ENCODE measurements at regions of chr3 and their contacts with region 1.

Region 1: DNA sequence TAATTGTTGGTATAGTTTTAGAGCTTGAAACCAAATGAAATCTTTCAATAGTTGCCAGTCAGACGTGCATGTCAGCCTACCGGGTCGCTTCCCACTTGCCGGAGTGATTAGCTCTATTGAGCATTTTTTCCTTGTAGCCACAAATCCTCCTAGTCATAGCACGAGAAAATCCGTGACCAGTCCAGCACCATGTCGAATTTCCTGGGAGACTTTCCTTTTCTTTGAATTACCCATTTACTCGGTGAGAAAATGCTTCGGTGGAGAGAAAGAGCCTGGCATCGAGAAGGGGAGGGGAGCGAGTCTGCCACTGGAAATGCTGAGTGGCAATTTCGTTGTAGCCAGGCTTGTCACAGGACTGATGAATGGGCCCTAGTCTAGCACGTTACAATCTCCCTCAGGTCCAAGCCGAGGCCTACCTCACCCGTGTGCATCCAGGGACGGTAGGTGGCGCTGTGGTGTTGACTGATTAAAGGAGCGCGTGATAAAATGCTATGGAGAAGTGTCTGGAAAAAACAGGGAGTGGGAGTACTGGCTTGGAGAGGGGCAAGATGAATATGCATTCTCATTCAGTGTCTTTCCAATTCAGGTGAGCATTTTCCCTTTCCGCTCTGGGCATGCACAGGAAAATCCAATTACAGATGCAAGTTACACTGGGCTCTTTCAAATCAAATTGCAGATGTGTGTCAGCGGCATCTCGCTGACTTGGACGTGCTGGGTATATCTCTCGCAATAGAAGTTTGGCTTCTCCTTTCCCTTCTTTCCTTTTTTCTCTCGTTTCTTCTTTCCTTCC is 238.8 kb downstream of the EDEM1 start:
- DNase-seq: no peak
- ATAC-seq: peak; percentile 83
- H3K4me3 ChIP-seq: no peak overlapping the region
- H3K27ac ChIP-seq: no peak overlapping the region
- H3K4me1 ChIP-seq: peaks cover 17% of the 10 kb centered on the region
- H3K27me3 ChIP-seq: no peaks in the 10 kb centered on the region
- CTCF ChIP-seq: peak; percentile 83 to 98 (median 89)
- EP300 ChIP-seq: no peak
- POLR2A ChIP-seq: no peak
- RAD21 ChIP-seq: peak; percentile 90

Region 2: GRCh38 chr3:5304789-5305683 is 121.3 kb before region 1 on chr3:
- CTCF ChIA-PET with region 1: interaction called, 6 read pairs
- POLR2A ChIA-PET with region 1: no interaction called
- RAD21 ChIA-PET with region 1: no interaction called
- SMC1A ChIA-PET with region 1: no interaction called
- in situ Hi-C with region 1: no loop called
- intact Hi-C with region 1: loop called (anchors 5 kb)
- DNase-seq: no peak
- ATAC-seq: peak; percentile 95
- H3K4me3 ChIP-seq: no peak overlapping the region
- H3K27ac ChIP-seq: no peak overlapping the region
- H3K4me1 ChIP-seq: no peaks in the 10 kb centered on the region
- H3K27me3 ChIP-seq: no peaks in the 10 kb centered on the region
- CTCF ChIP-seq: peak; percentile 68 to 78 (median 75)
- EP300 ChIP-seq: no peak
- POLR2A ChIP-seq: no peak
- RAD21 ChIP-seq: peak; percentile 85

Region 3: GRCh38 chr3:5401002-5401401 is 25.3 kb before region 1 on chr3:
- CTCF ChIA-PET with region 1: interaction called, 10 read pairs
- POLR2A ChIA-PET with region 1: no interaction called
- RAD21 ChIA-PET with region 1: no interaction called
- SMC1A ChIA-PET with region 1: interaction called, 8 read pairs
- in situ Hi-C with region 1: no loop called
- intact Hi-C with region 1: no loop called
- DNase-seq: no peak
- ATAC-seq: no peak
- H3K4me3 ChIP-seq: no peak overlapping the region
- H3K27ac ChIP-seq: no peak overlapping the region
- H3K4me1 ChIP-seq: no peaks in the 10 kb centered on the region
- H3K27me3 ChIP-seq: no peaks in the 10 kb centered on the region
- CTCF ChIP-seq: no peak
- EP300 ChIP-seq: no peak
- POLR2A ChIP-seq: no peak
- RAD21 ChIP-seq: no peak

Region 4: DNA sequence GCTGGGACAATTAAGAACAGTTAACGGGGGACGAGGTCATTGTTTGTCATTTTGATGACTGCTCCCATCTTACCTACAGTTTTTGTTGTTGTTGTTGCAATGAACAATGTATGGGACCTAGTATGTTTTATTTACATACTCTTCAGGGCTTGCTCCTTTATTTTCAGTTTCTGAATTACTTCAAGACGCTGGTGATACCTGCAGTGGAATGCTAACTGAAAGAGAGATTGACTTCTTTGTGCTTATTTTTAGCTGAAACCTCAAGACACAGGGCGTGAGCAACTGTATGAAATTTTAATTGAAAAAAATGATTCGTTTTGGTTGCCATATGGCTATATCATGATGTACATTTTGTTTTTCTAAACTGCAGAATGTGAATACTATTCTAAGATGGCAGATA is 59.1 kb after region 1 on chr3:
- CTCF ChIA-PET with region 1: no interaction called
- POLR2A ChIA-PET with region 1: no interaction called
- RAD21 ChIA-PET with region 1: no interaction called
- SMC1A ChIA-PET with region 1: no interaction called
- in situ Hi-C with region 1: no loop called
- intact Hi-C with region 1: no loop called
- DNase-seq: peak; percentile 2
- ATAC-seq: no peak
- H3K4me3 ChIP-seq: no peak overlapping the region
- H3K27ac ChIP-seq: no peak overlapping the region
- H3K4me1 ChIP-seq: no peaks in the 10 kb centered on the region
- H3K27me3 ChIP-seq: no peaks in the 10 kb centered on the region
- CTCF ChIP-seq: no peak
- EP300 ChIP-seq: no peak
- POLR2A ChIP-seq: no peak
- RAD21 ChIP-seq: no peak

Region 5: DNA sequence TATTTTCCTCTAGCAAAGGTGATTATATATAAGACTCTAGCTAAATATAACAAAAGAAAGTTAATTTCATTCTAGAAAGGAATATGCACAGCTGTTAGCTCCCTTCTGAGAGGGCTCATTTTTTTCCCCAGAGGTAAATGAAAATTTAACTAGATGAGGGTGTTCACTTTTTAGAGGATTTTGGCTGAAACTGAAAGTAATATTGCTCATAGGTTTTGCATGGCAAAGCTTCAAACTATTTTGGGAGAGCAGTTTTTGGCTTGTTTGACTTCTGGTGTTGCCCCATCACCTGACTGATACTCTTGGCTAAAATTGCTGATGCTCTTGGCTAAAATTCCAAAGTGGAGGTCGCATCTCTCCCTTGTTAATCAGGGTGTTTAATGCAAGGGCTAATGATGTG is 73.1 kb after region 1 on chr3:
- CTCF ChIA-PET with region 1: interaction called, 3 read pairs
- POLR2A ChIA-PET with region 1: no interaction called
- RAD21 ChIA-PET with region 1: no interaction called
- SMC1A ChIA-PET with region 1: no interaction called
- in situ Hi-C with region 1: no loop called
- intact Hi-C with region 1: loop called (anchors 1 kb)
- DNase-seq: peak; percentile 39
- ATAC-seq: peak; percentile 71
- H3K4me3 ChIP-seq: no peak overlapping the region
- H3K27ac ChIP-seq: no peak overlapping the region
- H3K4me1 ChIP-seq: peaks cover 15% of the 10 kb centered on the region
- H3K27me3 ChIP-seq: no peaks in the 10 kb centered on the region
- CTCF ChIP-seq: no peak
- EP300 ChIP-seq: no peak
- POLR2A ChIP-seq: no peak
- RAD21 ChIP-seq: no peak

Region 6: GRCh38 chr3:5731094-5731493 is 304.8 kb after region 1 on chr3:
- CTCF ChIA-PET with region 1: interaction called, 37 read pairs
- POLR2A ChIA-PET with region 1: no interaction called
- RAD21 ChIA-PET with region 1: interaction called, 6 read pairs
- SMC1A ChIA-PET with region 1: interaction called, 7 read pairs
- in situ Hi-C with region 1: no loop called
- intact Hi-C with region 1: loop called (anchors 2 kb)
- DNase-seq: no peak
- ATAC-seq: peak; percentile 55
- H3K4me3 ChIP-seq: no peak overlapping the region
- H3K27ac ChIP-seq: no peak overlapping the region
- H3K4me1 ChIP-seq: no peaks in the 10 kb centered on the region
- H3K27me3 ChIP-seq: no peaks in the 10 kb centered on the region
- CTCF ChIP-seq: peak; percentile 40 to 46 (median 44); a peak in 5 of 6 replicates
- EP300 ChIP-seq: no peak
- POLR2A ChIP-seq: no peak
- RAD21 ChIP-seq: peak; percentile 69

Region 7: DNA sequence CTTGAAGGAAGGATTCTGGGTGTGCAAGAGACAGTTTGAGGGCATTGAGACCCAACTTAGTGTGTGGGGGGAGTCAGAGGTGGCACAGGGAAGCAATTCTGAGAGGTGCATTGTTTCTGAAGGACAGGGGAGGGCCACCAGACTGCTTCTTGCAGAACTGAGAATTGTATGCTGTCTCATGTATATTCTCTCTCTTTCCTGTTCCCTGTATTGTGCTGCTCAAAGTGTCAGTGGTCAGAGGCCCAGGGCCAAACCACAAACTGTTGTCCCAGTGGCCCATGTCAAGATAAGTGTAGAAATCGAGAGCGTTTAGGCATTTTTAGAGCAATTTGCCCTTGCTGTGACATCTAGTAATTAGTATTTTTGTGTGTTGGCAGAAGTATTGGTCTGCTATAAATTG is 328.3 kb after region 1 on chr3:
- CTCF ChIA-PET with region 1: interaction called, 3 read pairs
- POLR2A ChIA-PET with region 1: no interaction called
- RAD21 ChIA-PET with region 1: no interaction called
- SMC1A ChIA-PET with region 1: interaction called, 3 read pairs
- in situ Hi-C with region 1: no loop called
- intact Hi-C with region 1: loop called (anchors 5 kb)
- DNase-seq: peak; percentile 41
- ATAC-seq: peak; percentile 88
- H3K4me3 ChIP-seq: no peak overlapping the region
- H3K27ac ChIP-seq: no peak overlapping the region
- H3K4me1 ChIP-seq: no peaks in the 10 kb centered on the region
- H3K27me3 ChIP-seq: no peaks in the 10 kb centered on the region; a peak in 1 of 4 replicates
- CTCF ChIP-seq: no peak
- EP300 ChIP-seq: peak; percentile 37 to 45; a peak in 2 of 4 replicates
- POLR2A ChIP-seq: no peak
- RAD21 ChIP-seq: no peak

Region 8: DNA sequence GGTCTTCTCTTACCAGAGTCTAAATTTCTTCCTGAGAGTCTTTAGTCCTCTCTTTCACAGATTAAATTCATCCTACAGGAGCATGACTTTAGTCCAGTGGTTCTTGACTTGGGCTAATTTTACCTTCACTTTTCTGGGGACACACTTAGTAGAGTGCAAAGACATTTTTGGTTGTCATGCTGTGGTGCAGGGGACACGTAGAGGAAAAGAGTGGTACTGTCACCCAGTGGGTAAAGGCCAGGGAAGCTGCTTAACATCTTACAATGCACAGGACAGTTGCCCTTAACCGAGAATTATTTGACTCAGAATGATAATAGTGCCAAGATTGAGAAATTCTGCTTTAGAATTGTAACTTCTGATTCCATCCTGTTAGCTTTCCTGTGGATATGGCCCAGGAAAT is 662.1 kb after region 1 on chr3:
- CTCF ChIA-PET with region 1: no interaction called
- POLR2A ChIA-PET with region 1: no interaction called
- RAD21 ChIA-PET with region 1: no interaction called
- SMC1A ChIA-PET with region 1: no interaction called
- in situ Hi-C with region 1: no loop called
- intact Hi-C with region 1: loop called (anchors 5 kb)
- DNase-seq: no peak
- ATAC-seq: peak; percentile 78
- H3K4me3 ChIP-seq: no peak overlapping the region
- H3K27ac ChIP-seq: no peak overlapping the region
- H3K4me1 ChIP-seq: no peaks in the 10 kb centered on the region
- H3K27me3 ChIP-seq: no peaks in the 10 kb centered on the region
- CTCF ChIP-seq: 0 out of 6 replicates have a peak, but pooled peaks of 1 of the 3 experiments have one; percentile 10
- EP300 ChIP-seq: no peak
- POLR2A ChIP-seq: no peak
- RAD21 ChIP-seq: peak; percentile 41; the same call in 1 of the 2 replicates